Prostate gland (tissue), 2 donors: ENCODE measurements at regions of chr1 and their contacts with region 1.

Region 1: GRCh38 chr1:151680812-151681211 is 35.8 kb downstream of the CELF3 start:
- DNase-seq: peak; percentile 25
- H3K4me3 ChIP-seq: no peak overlapping the region
- H3K27ac ChIP-seq: peak overlapping the region in 1 of 2 donors; percentile 52
- H3K4me1 ChIP-seq: peaks cover 5% of the 10 kb centered on the region
- H3K27me3 ChIP-seq: no peaks in the 10 kb centered on the region
- CTCF ChIP-seq: no peak
- POLR2A ChIP-seq: peak; percentile 11

Region 2: GRCh38 chr1:151502923-151503780 is 177.7 kb before region 1 on chr1:
- intact Hi-C with region 1: no loop called
- DNase-seq: no peak
- H3K4me3 ChIP-seq: no peak overlapping the region
- H3K27ac ChIP-seq: no peak overlapping the region
- H3K4me1 ChIP-seq: no peaks in the 10 kb centered on the region
- H3K27me3 ChIP-seq: no peaks in the 10 kb centered on the region
- CTCF ChIP-seq: no peak
- POLR2A ChIP-seq: no peak

Region 3: DNA sequence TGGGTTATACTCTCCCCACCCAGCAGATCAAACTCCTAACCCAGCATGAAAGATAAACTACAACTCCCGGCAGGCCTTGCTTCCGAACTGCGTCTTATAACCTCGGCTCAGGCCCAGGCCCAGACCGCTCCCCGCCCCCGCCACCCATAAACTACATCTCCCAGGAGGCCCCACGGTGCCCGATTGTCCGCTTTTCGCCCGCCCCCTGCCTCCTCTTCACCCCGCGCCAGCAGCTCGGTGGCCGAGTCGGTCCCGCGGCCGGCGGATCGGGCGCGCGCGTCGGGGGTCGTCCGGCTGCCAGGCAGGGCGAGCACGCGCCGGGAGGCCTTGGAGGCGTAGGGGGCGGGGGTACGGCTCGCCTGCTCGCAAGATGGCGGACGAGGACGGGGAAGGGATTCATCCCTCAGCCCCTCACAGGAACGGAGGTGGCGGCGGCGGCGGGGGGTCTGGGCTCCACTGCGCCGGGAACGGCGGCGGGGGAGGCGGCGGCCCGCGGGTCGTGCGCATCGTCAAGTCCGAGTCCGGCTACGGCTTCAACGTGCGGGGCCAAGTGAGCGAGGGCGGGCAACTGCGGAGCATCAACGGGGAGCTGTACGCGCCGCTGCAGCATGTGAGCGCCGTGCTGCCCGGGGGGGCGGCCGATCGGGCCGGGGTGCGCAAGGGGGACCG is 68.8 kb before region 1 on chr1 and contains the start of gene SNX27:
- intact Hi-C with region 1: loop called (anchors 10 kb)
- DNase-seq: peak; percentile 92
- H3K4me3 ChIP-seq: peak within 1 kb of the TSS; percentile 94 to 99
- H3K27ac ChIP-seq: peak within 1 kb of the TSS; percentile 91 to 95
- H3K4me1 ChIP-seq: no peaks in the 10 kb centered on the region
- H3K27me3 ChIP-seq: no peaks in the 10 kb centered on the region
- CTCF ChIP-seq: peak in 1 of 4 experiments; percentile 6
- POLR2A ChIP-seq: peak; percentile 77
- total RNA-seq, gene SNX27: 24.1 to 38.4 TPM